Activated naive CD4-positive, alpha-beta T cell treated with anti-CD3 and anti-CD28 coated beads for 36 hours (primary cell): ENCODE measurements at regions of chr3 and their contacts with region 1.

Region 1: DNA sequence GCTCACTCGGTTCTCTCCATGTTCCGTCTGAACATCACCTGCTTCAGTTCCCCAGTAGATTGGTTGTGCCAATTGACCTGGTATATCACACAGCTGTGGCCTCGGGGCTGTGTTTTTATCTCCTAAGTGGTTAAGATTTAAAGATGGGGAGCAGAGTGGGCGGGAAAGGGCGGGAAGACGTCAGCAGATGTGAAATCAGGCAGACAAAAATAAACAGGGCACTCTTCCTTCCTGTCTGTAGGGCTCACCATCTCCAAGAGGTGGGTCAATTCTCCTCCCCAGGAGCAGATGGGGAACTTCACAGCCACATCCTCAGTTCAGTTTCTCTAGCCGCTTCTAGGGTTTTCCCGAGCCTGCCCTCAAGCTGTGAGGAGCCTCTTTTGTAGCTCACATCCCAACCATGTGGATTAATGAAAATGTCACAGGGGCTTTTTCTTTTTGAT is 26.8 kb upstream of the LIMD1 start:
- DNase-seq: peak; percentile 83
- H3K4me3 Mint-ChIP-seq: no peak overlapping the region
- H3K27ac Mint-ChIP-seq: peak overlapping the region; percentile 83
- H3K4me1 Mint-ChIP-seq: peaks cover 27% of the 10 kb centered on the region
- H3K27me3 Mint-ChIP-seq: no peaks in the 10 kb centered on the region

Region 2: GRCh38 chr3:44482725-44483124 is 1085.0 kb before region 1 on chr3:
- CTCF ChIA-PET with region 1: no interaction called
- intact Hi-C with region 1: no loop called
- DNase-seq: no peak
- H3K4me3 Mint-ChIP-seq: no peak overlapping the region
- H3K27ac Mint-ChIP-seq: no peak overlapping the region
- H3K4me1 Mint-ChIP-seq: peaks cover 8% of the 10 kb centered on the region
- H3K27me3 Mint-ChIP-seq: no peaks in the 10 kb centered on the region

Region 3: GRCh38 chr3:45528429-45528828 is 39.3 kb before region 1 on chr3:
- CTCF ChIA-PET with region 1: interaction called, 5 read pairs
- intact Hi-C with region 1: loop called (anchors 2 kb)
- DNase-seq: peak; percentile 67
- H3K4me3 Mint-ChIP-seq: no peak overlapping the region
- H3K27ac Mint-ChIP-seq: no peak overlapping the region
- H3K4me1 Mint-ChIP-seq: peaks cover 15% of the 10 kb centered on the region
- H3K27me3 Mint-ChIP-seq: no peaks in the 10 kb centered on the region

Region 4: GRCh38 chr3:45593708-45594609 is 26.2 kb after region 1 on chr3:
- CTCF ChIA-PET with region 1: interaction called, 4 read pairs
- intact Hi-C with region 1: loop called (anchors 1 kb)
- DNase-seq: peak; percentile 61
- H3K4me3 Mint-ChIP-seq: peak overlapping the region; percentile 80
- H3K27ac Mint-ChIP-seq: peak overlapping the region; percentile 84
- H3K4me1 Mint-ChIP-seq: peaks cover 48% of the 10 kb centered on the region
- H3K27me3 Mint-ChIP-seq: no peaks in the 10 kb centered on the region

Region 5: GRCh38 chr3:46276502-46277099 is 708.9 kb after region 1 on chr3:
- CTCF ChIA-PET with region 1: no interaction called
- intact Hi-C with region 1: no loop called
- DNase-seq: peak; percentile 87
- H3K4me3 Mint-ChIP-seq: no peak overlapping the region
- H3K27ac Mint-ChIP-seq: no peak overlapping the region
- H3K4me1 Mint-ChIP-seq: peaks cover 20% of the 10 kb centered on the region
- H3K27me3 Mint-ChIP-seq: peaks cover 14% of the 10 kb centered on the region